ENCODE measurements at regions of chr5 and their contacts with region 1.

Region 1: GRCh38 chr5:154421868-154422267 is 23.9 kb upstream of the SAP30L start:
- DNase-seq: peak; percentile 18
- ATAC-seq: peak; percentile 83
- H3K4me3 ChIP-seq: no peak overlapping the region
- H3K27ac ChIP-seq: no peak overlapping the region
- H3K4me1 ChIP-seq: no peaks in the 10 kb centered on the region
- H3K27me3 ChIP-seq: no peaks in the 10 kb centered on the region
- CTCF ChIP-seq: peak; percentile 42 to 67 (median 65); a peak in 5 of 6 replicates
- POLR2A ChIP-seq: no peak
- RAD21 ChIP-seq: peak; percentile 68

Region 2: GRCh38 chr5:153711755-153712154 is 710.1 kb before region 1 on chr5:
- CTCF ChIA-PET with region 1: no interaction called
- POLR2A ChIA-PET with region 1: no interaction called
- RAD21 ChIA-PET with region 1: no interaction called
- intact Hi-C with region 1: no loop called
- DNase-seq: no peak
- ATAC-seq: peak; percentile 49; the same call in 1 of the 2 replicates
- H3K4me3 ChIP-seq: no peak overlapping the region
- H3K27ac ChIP-seq: no peak overlapping the region
- H3K4me1 ChIP-seq: no peaks in the 10 kb centered on the region
- H3K27me3 ChIP-seq: peaks cover 13% of the 10 kb centered on the region; the same call in 1 of the 2 replicates
- CTCF ChIP-seq: peak; percentile 19 to 38 (median 22); a peak in 4 of 6 replicates
- POLR2A ChIP-seq: no peak
- RAD21 ChIP-seq: peak; percentile 49

Region 3: DNA sequence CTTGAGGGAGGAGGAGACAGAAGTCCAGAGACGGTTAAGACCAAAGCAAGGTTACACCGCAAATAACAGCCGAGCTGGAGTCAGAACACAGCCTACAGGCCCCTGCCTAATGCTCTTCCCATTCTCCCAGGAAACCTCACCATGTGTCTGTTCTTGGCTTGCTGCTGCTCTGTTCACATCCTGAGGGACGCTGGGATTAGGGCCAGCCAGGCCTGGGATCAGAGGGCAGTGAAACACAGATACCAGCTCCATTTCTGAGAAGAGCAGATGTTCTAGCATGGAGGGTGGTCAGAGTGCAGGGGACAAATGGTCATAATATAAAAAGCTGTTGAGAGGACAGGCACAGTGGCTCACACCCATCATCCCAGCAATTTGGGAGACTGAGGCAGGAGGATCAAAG is 208.5 kb after region 1 on chr5:
- CTCF ChIA-PET with region 1: interaction called, 3 read pairs
- POLR2A ChIA-PET with region 1: no interaction called
- RAD21 ChIA-PET with region 1: interaction called in 1 of 2 experiments, 5 read pairs
- intact Hi-C with region 1: loop called (anchors 5 kb)
- DNase-seq: no peak
- ATAC-seq: no peak
- H3K4me3 ChIP-seq: no peak overlapping the region
- H3K27ac ChIP-seq: no peak overlapping the region
- H3K4me1 ChIP-seq: no peaks in the 10 kb centered on the region
- H3K27me3 ChIP-seq: no peaks in the 10 kb centered on the region
- CTCF ChIP-seq: no peak
- POLR2A ChIP-seq: no peak
- RAD21 ChIP-seq: no peak